Activated naive CD4-positive, alpha-beta T cell treated with anti-CD3 and anti-CD28 coated beads for 36 hours (primary cell): ENCODE measurements at regions of chr18 and their contacts with region 1.

Region 1: GRCh38 chr18:50307738-50308470 is 20.4 kb upstream of the CXXC1 start:
- DNase-seq: peak; percentile 96
- H3K4me3 Mint-ChIP-seq: peak overlapping the region; percentile 85
- H3K27ac Mint-ChIP-seq: peak overlapping the region; percentile 52
- H3K4me1 Mint-ChIP-seq: peaks cover 10% of the 10 kb centered on the region
- H3K27me3 Mint-ChIP-seq: peaks cover 11% of the 10 kb centered on the region

Region 2: GRCh38 chr18:50281295-50281971 is 26.5 kb before region 1 on chr18 and contains the start of gene MBD1:
- CTCF ChIA-PET with region 1: no interaction called
- intact Hi-C with region 1: loop called (anchors 1 kb)
- DNase-seq: peak; percentile 96
- H3K4me3 Mint-ChIP-seq: peak within 1 kb of the TSS; percentile 97
- H3K27ac Mint-ChIP-seq: peak within 1 kb of the TSS; percentile 84
- H3K4me1 Mint-ChIP-seq: peaks cover 36% of the 10 kb centered on the region
- H3K27me3 Mint-ChIP-seq: no peaks in the 10 kb centered on the region
- total RNA-seq, gene MBD1: 66.4 to 69.0 TPM

Region 3: DNA sequence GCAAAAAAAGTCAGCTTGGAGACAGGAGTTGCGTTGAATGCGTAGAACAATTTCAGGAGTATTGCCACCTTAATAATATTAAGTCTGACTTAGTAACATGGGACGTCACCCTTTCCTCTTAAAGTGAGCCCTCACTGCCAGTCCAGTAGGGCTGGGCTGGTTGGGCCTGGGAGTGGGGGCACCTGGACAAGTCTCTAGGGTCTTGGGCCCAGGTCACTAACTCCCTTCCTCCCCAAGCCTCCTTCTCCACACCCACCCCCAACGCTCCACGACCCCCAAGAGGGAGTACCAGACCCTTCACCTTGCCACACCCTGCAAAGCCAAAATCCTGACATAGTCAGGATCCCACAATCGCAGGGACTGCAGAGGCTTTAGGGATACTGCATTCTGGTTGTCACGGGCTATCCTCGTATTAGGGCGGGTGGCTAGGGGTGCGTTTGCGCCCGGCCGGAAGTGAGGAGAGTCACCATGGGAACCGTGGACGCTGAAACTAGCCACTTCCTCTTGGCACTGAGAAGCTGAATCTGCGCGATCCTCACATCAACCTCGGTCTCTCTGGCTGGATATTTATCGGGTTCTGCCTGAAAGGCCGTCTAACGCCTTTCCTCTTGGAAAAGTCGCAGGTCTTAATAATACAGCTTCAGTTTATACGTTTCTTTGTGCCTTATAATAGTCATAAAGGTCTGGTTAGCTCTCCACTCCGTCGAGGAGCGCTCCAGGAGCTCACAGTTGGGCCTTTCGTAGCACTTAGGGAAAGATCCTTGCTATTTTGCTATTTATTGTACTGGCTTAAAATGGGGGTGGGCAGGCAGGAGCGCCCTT is 10.1 kb before region 1 on chr18:
- CTCF ChIA-PET with region 1: interaction called, 3 read pairs
- intact Hi-C with region 1: loop called (anchors 1 kb)
- DNase-seq: peak; percentile 88
- H3K4me3 Mint-ChIP-seq: peak overlapping the region; percentile 68
- H3K27ac Mint-ChIP-seq: no peak overlapping the region
- H3K4me1 Mint-ChIP-seq: peaks cover 5% of the 10 kb centered on the region
- H3K27me3 Mint-ChIP-seq: peaks cover 19% of the 10 kb centered on the region

Region 4: GRCh38 chr18:50388988-50389387 is 81.1 kb after region 1 on chr18:
- CTCF ChIA-PET with region 1: no interaction called
- intact Hi-C with region 1: no loop called
- DNase-seq: no peak
- H3K4me3 Mint-ChIP-seq: no peak overlapping the region
- H3K27ac Mint-ChIP-seq: no peak overlapping the region
- H3K4me1 Mint-ChIP-seq: no peaks in the 10 kb centered on the region
- H3K27me3 Mint-ChIP-seq: peaks cover 4% of the 10 kb centered on the region

Region 5: DNA sequence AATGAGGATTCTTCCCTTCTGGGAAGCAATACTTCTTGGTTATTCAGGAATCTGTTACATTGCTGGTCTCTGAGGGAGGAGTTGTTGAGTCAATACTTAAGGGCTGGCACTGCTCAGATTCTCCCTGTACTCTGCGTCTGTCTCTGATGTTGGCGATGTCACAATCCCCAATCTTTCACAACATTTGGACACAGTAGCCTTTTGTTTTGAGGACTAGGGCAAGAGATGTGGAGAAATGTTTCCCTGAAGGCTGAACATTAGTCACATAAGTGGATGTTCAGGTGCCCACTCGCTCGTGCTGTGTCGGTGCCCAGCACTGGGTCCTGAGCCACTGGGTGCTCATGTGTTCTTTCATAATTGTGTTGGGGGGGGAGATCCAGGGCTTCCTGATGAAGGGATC is 306.9 kb after region 1 on chr18:
- CTCF ChIA-PET with region 1: no interaction called
- intact Hi-C with region 1: no loop called
- DNase-seq: no peak
- H3K4me3 Mint-ChIP-seq: no peak overlapping the region
- H3K27ac Mint-ChIP-seq: no peak overlapping the region
- H3K4me1 Mint-ChIP-seq: no peaks in the 10 kb centered on the region
- H3K27me3 Mint-ChIP-seq: peaks cover 7% of the 10 kb centered on the region